ENCODE measurements at regions of chr15 and their contacts with region 1.

Region 1: DNA sequence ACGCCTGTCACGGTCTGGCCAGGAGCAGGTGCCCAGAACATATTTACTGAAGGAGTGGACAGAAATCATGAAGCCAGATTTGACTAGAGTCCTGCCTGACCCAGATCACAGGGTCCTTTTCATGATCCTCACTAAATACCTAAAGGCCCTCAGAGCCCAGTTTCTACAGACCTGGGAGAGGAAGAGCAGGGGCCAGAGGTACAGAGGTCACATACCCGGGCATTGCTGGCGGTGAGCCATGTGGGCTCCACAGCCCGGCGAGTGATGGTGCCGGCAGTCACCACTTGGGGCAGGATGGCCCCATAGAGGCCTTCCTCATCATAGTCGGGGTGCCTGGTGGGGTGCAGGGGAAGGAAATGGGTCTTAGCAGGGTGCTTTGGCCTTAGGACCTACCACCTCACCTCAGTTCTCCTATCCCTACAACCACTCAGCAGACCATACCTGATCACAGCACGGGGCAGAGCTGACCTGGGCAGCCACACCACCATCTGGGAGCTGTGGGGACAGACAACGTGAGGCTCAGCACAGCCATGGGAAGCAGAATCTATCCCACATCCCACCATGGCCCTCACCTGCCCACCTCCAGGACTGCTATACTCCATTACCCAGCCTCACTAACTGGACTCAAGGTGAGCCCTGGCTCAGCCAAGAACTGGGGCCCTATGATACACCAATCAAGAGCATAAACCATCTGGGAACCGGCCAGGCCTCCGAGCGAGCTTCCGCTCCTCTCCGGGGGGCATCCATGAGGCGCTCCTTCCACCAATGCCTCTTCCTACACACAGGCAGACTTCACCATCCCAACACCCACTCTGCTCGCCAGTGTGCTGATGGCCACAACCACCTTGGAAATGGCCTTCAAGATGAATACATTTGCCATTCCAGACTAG is 12.9 kb downstream of the POLG start:
- DNase-seq: no peak
- H3K4me3 ChIP-seq: no peak overlapping the region
- CTCF ChIP-seq: no peak

Region 2: GRCh38 chr15:89334510-89335288 is 12.9 kb after region 1 on chr15 and contains the start of gene POLG:
- CTCF ChIA-PET with region 1: interaction called, 17 read pairs
- POLR2A ChIA-PET with region 1: interaction called, 6 read pairs
- DNase-seq: peak; percentile 97
- H3K4me3 ChIP-seq: peak within 1 kb of the TSS; percentile 87
- CTCF ChIP-seq: no peak

Measured in AG04449 (cell line).